Activated CD4-positive, alpha-beta T cell treated with anti-CD3 and anti-CD28 coated beads, Interleukin-2, amount 10 ng/mL, durations not matched to agents 24 days and 14 days (primary cell): ENCODE measurements at regions of chr1 and their contacts with region 1.

Region 1: GRCh38 chr1:172818841-172819527 is 160.1 kb downstream of the FASLG start:
- DNase-seq: peak; percentile 80
- H3K4me3 Mint-ChIP-seq: peak overlapping the region; percentile 77
- H3K27ac Mint-ChIP-seq: peak overlapping the region; percentile 82
- H3K4me1 Mint-ChIP-seq: peaks cover 41% of the 10 kb centered on the region
- H3K27me3 Mint-ChIP-seq: peaks cover 14% of the 10 kb centered on the region

Region 2: DNA sequence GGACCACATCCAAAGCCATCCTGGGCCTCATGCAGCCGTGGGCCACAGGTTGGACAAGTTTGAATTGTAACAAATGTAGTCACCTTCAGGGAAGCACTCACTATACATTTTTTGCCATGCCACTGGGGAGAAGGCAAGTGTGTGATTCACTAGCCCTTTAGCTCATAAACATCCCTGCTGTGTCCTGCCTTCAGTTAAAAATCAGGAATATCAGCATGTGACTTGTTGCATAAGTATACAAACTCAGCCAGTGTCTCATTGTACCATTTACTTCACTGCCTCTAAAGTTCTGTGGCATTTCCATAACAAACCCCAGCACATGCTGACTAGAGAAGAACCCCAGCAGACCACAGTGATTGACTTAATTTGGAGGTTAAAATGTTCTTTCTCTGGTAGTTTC is 540.5 kb before region 1 on chr1:
- intact Hi-C with region 1: no loop called
- DNase-seq: no peak
- H3K4me3 Mint-ChIP-seq: no peak overlapping the region
- H3K27ac Mint-ChIP-seq: no peak overlapping the region
- H3K4me1 Mint-ChIP-seq: peaks cover 14% of the 10 kb centered on the region
- H3K27me3 Mint-ChIP-seq: no peaks in the 10 kb centered on the region

Region 3: DNA sequence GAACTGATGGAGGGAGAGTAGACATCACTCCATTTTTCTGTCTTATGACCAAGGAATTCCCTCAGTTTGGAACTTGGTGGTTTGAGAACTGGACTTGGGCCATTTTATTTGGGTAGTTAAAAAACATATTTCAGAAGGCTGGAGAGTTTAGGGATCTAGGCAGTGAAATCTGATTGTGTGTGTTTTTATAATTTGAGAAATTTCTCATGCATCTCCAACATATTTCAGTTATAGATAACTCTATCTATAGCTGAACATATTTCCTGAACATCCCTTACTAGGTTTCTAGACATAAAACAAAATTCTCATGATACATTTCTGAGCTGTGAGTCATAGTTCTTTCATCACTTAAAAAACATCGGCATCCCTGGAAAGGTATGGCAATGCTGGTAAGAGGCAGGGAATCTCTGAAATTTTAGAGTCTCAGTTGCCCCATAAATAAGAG is 57.4 kb before region 1 on chr1:
- intact Hi-C with region 1: loop called (anchors 2 kb)
- DNase-seq: no peak
- H3K4me3 Mint-ChIP-seq: no peak overlapping the region
- H3K27ac Mint-ChIP-seq: no peak overlapping the region
- H3K4me1 Mint-ChIP-seq: peaks cover 15% of the 10 kb centered on the region
- H3K27me3 Mint-ChIP-seq: peaks cover 31% of the 10 kb centered on the region

Region 4: GRCh38 chr1:172778456-172779455 is 40.2 kb before region 1 on chr1:
- intact Hi-C with region 1: loop called (anchors 5 kb)
- DNase-seq: peak; percentile 48
- H3K4me3 Mint-ChIP-seq: no peak overlapping the region
- H3K27ac Mint-ChIP-seq: no peak overlapping the region
- H3K4me1 Mint-ChIP-seq: peaks cover 6% of the 10 kb centered on the region
- H3K27me3 Mint-ChIP-seq: peaks cover 22% of the 10 kb centered on the region

Region 5: DNA sequence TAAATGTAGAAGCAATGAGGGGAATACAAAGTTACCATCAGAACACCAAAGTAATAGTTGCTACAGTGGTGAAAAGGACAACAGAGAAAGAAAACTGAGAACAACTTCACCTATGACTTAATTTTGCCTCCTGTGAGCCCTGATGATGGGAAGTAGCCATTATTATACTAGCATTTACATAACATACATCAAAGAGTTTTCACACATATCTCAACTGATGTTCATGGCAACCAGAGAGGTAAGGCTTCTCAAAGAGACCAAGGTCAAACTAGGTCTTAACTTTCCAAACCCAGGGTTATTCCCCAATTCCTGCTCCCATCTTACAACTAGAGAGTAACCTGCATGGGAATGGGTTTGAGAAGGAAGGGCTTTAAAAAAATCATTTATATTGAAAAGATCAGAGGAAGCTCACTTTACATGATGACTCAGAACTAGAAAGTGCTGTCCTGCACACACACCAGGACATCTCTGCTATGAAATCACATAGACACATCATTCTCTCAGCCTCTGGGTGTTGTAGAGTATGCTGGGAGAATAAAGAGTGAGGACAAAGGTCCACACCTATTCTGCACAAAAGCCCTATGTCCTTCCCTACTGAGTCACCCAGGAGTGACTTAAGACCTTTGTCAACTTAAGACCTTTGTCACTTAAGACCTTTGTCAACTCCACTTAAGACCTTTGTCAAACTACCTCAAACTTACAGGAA is 52.1 kb after region 1 on chr1:
- intact Hi-C with region 1: loop called (anchors 1 kb)
- DNase-seq: peak; percentile 67
- H3K4me3 Mint-ChIP-seq: no peak overlapping the region
- H3K27ac Mint-ChIP-seq: no peak overlapping the region
- H3K4me1 Mint-ChIP-seq: peaks cover 33% of the 10 kb centered on the region
- H3K27me3 Mint-ChIP-seq: peaks cover 39% of the 10 kb centered on the region

Region 6: GRCh38 chr1:172928412-172928811 is 109.4 kb after region 1 on chr1:
- intact Hi-C with region 1: no loop called
- DNase-seq: no peak
- H3K4me3 Mint-ChIP-seq: no peak overlapping the region
- H3K27ac Mint-ChIP-seq: no peak overlapping the region
- H3K4me1 Mint-ChIP-seq: peaks cover 3% of the 10 kb centered on the region
- H3K27me3 Mint-ChIP-seq: peaks cover 12% of the 10 kb centered on the region

Region 7: GRCh38 chr1:173038875-173039554 is 220.0 kb after region 1 on chr1:
- intact Hi-C with region 1: loop called (anchors 2 kb)
- DNase-seq: peak; percentile 67
- H3K4me3 Mint-ChIP-seq: no peak overlapping the region
- H3K27ac Mint-ChIP-seq: peak overlapping the region; percentile 9
- H3K4me1 Mint-ChIP-seq: peaks cover 19% of the 10 kb centered on the region
- H3K27me3 Mint-ChIP-seq: peaks cover 2% of the 10 kb centered on the region

Region 8: GRCh38 chr1:173202430-173203145 is 383.6 kb after region 1 on chr1:
- intact Hi-C with region 1: loop called (anchors 2 kb)
- DNase-seq: peak; percentile 67
- H3K4me3 Mint-ChIP-seq: no peak overlapping the region
- H3K27ac Mint-ChIP-seq: no peak overlapping the region
- H3K4me1 Mint-ChIP-seq: peaks cover 32% of the 10 kb centered on the region
- H3K27me3 Mint-ChIP-seq: peaks cover 32% of the 10 kb centered on the region

Region 9: GRCh38 chr1:173297798-173298391 is 478.9 kb after region 1 on chr1:
- intact Hi-C with region 1: loop called (anchors 5 kb)
- DNase-seq: peak; percentile 68
- H3K4me3 Mint-ChIP-seq: no peak overlapping the region
- H3K27ac Mint-ChIP-seq: peak overlapping the region; percentile 51
- H3K4me1 Mint-ChIP-seq: peaks cover 20% of the 10 kb centered on the region
- H3K27me3 Mint-ChIP-seq: peaks cover 22% of the 10 kb centered on the region